BJ (cell line): ENCODE measurements at regions of chr19 and their contacts with region 1.

Region 1: DNA sequence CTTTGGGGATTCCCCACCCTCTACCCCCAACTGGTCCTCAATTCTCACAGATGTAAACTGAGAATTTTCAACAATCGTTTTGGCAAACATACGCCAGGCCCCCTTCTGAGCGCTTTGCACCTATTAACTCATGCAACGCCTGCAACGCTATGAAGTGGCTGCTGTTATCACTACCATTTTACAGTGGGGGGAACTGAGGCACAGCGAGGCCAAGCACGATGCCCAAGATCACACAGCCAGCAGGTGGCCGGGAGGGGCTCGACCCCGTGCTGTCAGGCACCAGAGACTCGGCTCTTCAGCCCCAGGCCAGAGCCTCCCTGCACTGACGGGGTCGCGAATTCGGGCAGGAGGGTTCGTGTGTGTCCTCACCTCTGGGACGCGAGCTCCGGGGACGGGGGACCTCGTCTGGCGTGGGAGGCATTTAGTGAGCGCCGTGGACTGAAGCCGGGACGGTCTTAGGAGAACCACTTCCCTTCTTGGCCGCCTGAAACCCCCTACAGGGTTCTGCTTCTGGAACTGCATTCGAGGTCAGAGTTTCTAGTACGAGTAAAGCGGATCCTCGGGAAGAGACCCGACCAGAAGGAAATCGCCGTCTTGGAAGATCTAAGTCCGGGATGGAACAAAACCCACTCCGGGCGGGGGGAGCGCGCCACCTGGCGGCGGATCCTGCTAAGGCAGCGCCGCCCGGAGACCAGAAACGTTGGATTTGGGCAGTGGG is 21.0 kb downstream of the ZNF114 start:
- DNase-seq: no peak
- H3K4me3 ChIP-seq: peak overlapping the region; percentile 41
- H3K27me3 ChIP-seq: 0 out of 2 replicates have a peak, but pooled peaks cover 1% of the 10 kb centered on the region
- CTCF ChIP-seq: peak; percentile 99

Region 2: GRCh38 chr19:48271531-48272151 is 19.3 kb before region 1 on chr19:
- CTCF ChIA-PET with region 1: interaction called, 156 read pairs
- POLR2A ChIA-PET with region 1: no interaction called
- DNase-seq: no peak
- H3K4me3 ChIP-seq: peak overlapping the region; percentile 28
- H3K27me3 ChIP-seq: no peaks in the 10 kb centered on the region
- CTCF ChIP-seq: no peak

Region 3: DNA sequence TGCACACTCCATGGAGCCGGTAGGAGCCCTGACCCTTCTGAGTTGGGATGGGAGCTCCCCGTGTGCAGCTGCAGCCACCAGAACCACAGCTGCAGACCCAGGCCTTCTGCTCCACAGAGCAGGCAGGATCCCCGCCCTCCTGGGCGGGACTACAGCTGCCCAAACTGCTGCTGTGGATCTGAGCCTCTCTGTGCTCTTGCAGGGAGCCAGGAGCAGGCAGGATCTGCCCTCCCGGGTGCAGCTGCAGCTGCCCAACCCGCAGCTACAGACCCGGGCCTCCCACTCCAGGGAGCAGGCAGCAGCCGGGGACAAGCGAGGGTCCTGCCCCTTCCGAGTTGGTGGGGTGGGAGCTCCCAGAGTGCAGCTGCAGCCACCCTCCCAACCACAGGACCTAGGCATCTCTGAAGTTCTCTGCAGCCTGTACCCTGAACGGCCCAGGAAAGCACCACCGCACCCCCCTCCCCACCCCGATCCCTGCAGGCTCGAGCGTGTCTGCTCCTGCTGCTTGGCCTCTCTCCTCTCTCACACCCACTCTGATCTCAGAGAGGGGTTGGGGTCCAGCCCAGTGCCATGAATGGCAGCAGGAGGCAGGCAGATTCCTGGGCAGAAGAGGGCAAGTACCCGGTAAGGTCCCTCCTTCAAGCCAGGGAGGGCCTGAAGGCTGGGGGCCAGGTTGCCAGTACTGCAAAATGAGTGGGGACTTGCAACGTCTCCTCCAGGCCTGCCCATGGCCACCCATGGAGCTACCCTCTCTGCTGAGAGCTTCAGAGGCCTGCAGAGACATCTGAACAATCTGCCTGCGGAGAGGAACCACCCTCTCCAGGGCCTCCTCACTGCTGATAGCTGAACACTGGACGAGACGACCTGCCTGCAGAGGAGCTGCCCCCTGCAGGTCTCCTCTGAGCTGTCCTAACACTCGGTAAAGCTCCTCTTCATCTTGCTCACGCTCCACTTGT is 18.0 kb after region 1 on chr19:
- CTCF ChIA-PET with region 1: interaction called, 12 read pairs
- POLR2A ChIA-PET with region 1: no interaction called
- DNase-seq: no peak
- H3K4me3 ChIP-seq: no peak overlapping the region
- H3K27me3 ChIP-seq: peaks cover 4% of the 10 kb centered on the region
- CTCF ChIP-seq: peak; percentile 49

Region 4: DNA sequence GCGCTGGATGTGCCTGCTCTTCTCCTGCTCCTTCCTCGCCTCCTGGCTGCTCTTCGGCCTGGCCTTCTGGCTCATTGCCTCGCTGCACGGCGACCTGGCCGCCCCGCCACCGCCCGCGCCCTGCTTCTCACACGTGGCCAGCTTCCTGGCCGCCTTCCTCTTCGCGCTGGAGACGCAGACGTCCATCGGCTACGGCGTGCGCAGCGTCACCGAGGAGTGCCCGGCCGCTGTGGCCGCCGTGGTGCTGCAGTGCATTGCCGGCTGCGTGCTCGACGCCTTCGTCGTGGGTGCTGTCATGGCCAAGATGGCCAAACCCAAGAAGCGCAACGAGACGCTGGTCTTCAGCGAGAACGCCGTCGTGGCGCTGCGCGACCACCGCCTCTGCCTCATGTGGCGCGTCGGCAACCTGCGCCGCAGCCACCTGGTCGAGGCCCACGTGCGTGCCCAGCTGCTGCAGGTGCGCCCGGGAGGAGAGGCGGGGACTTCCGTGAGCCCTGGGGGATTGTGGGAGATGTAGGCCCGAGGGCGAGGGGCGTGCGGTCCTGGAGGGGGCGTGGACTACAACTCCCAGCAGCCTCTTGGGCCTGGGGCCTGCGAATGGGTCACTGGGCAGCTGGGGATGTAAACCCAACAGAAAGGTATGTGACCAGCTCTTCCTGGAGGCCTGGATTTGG is 171.2 kb after region 1 on chr19:
- CTCF ChIA-PET with region 1: no interaction called
- POLR2A ChIA-PET with region 1: no interaction called
- DNase-seq: no peak
- H3K4me3 ChIP-seq: no peak overlapping the region
- H3K27me3 ChIP-seq: no peaks in the 10 kb centered on the region
- CTCF ChIP-seq: no peak